Vagina (tissue), 2 donors: ENCODE measurements at regions of chr11 and their contacts with region 1.

Region 1: DNA sequence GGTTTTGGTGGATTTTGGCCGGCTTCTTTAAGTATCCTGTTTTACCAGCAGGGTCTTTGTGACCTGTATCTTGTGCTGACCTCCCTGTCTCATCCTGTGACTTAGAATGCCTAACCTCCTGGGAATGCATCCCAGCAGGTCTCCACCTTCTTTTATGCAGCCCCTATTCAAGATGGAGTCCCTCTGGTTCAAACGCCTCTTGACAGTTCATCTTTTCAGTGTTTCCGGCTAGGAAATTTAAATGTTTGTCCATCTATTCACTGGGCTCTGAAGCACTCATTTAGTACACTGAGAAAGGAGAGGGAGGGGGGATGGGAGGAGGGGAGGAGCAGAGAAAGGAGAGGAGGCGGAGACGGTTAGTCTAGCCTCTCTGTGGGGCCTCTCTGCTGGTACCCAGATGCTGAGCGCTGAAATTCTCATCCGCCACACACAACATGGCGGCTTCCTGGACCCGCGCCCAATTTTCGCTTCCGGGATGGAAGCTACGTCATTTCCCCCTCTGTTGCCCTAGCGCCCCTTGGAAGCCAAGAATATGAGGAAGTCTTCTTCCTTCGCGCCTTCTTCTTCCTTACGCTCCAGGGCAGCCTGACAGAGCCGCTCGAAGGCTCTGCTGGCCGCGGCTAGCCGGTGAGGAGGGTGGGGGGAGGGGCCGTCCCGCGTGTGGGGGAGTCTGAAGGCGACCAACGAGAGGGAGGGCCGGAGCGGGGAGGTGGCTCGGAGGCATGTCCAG is 69.0 kb upstream of the SYT13 start:
- DNase-seq: no peak
- H3K4me3 ChIP-seq: peak overlapping the region; percentile 59 to 69
- H3K27ac ChIP-seq: peak overlapping the region; percentile 13
- H3K4me1 ChIP-seq: peaks cover 12% of the 10 kb centered on the region
- H3K27me3 ChIP-seq: no peaks in the 10 kb centered on the region
- CTCF ChIP-seq: no peak
- POLR2A ChIP-seq: no peak

Region 2: DNA sequence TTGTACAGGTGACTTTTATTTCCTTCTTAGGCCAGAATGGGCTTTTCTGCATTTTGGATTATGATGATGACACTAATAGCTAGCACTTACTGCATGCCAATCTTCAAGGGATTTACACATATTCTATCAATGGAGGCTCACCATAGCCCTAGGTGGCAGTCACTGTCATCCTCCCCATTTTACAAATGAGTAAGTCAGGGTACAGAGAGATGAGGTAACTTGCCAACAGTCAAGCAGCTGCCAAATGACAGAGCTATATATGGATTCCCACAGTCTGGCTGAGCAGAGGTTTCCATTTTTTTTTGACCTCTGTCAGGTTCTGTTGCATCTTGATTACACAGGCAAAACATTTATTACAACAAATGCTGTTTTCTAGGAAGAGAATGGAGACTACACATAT is 1436.5 kb before region 1 on chr11:
- intact Hi-C with region 1: no loop called
- DNase-seq: no peak
- H3K4me3 ChIP-seq: no peak overlapping the region
- H3K27ac ChIP-seq: no peak overlapping the region
- H3K4me1 ChIP-seq: peaks cover 37% of the 10 kb centered on the region
- H3K27me3 ChIP-seq: no peaks in the 10 kb centered on the region
- CTCF ChIP-seq: no peak
- POLR2A ChIP-seq: no peak

Region 3: GRCh38 chr11:45771566-45772448 is 416.7 kb after region 1 on chr11:
- intact Hi-C with region 1: loop called (anchors 5 kb)
- DNase-seq: no peak
- H3K4me3 ChIP-seq: peak overlapping the region; percentile 53 to 55
- H3K27ac ChIP-seq: peak overlapping the region; percentile 67
- H3K4me1 ChIP-seq: peaks cover 4% of the 10 kb centered on the region
- H3K27me3 ChIP-seq: no peaks in the 10 kb centered on the region
- CTCF ChIP-seq: peak; percentile 33 to 79 (median 67)
- POLR2A ChIP-seq: no peak